Activated CD4-positive, alpha-beta memory T cell treated with anti-CD3 and anti-CD28 coated beads for 36 hours (primary cell): ENCODE measurements at regions of chr16 and their contacts with region 1.

Region 1: GRCh38 chr16:84138824-84139627 is 6.0 kb downstream of the HSDL1 start:
- DNase-seq: peak; percentile 63
- H3K4me3 Mint-ChIP-seq: peak overlapping the region; percentile 7
- H3K27ac Mint-ChIP-seq: peak overlapping the region; percentile 3
- H3K4me1 Mint-ChIP-seq: peaks cover 41% of the 10 kb centered on the region
- H3K27me3 Mint-ChIP-seq: no peaks in the 10 kb centered on the region

Region 2: DNA sequence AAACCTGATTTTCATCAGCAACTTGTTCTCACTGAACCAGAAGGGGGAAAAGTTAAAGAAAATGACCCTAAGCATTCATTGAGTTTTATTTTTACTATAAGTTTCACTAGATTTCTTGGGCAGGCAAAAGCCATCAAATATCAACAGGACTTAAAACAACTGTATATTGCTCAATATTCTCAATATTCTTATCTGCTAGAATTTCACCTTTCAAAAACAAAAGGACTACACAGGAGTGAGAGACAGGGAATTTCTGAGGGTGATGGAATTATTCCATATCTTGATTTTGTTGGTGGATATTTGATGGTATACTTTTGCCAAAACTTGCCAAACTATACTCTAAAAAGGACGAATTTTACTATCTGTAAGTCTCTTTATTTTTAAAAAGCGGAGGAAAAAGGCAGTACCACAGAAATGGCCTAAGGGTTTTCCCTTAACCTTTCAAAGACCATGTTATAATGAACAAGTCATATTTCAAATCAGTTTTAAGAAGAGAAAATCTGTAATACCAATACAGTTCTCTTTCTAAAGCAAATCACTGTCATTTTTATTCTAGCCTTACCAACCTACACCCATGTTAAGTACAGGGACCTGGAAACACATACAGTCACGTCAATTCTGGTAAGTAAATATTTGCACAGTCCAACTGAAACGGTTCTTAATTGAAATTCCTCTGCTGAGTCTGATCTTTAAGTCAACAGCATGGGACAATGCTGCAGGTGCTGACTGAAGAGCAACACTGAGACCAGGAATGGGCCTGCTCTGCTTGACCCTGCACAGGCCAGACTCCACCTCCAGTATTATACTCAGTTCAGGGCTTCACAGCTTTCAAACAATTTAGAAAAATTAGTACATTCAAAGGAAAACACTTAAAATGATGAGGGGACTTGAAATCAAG is 42.7 kb before region 1 on chr16:
- CTCF ChIA-PET with region 1: no interaction called
- POLR2A ChIA-PET with region 1: no interaction called
- intact Hi-C with region 1: loop called (anchors 5 kb)
- DNase-seq: no peak
- H3K4me3 Mint-ChIP-seq: no peak overlapping the region
- H3K27ac Mint-ChIP-seq: no peak overlapping the region
- H3K4me1 Mint-ChIP-seq: peaks cover 10% of the 10 kb centered on the region
- H3K27me3 Mint-ChIP-seq: no peaks in the 10 kb centered on the region

Region 3: DNA sequence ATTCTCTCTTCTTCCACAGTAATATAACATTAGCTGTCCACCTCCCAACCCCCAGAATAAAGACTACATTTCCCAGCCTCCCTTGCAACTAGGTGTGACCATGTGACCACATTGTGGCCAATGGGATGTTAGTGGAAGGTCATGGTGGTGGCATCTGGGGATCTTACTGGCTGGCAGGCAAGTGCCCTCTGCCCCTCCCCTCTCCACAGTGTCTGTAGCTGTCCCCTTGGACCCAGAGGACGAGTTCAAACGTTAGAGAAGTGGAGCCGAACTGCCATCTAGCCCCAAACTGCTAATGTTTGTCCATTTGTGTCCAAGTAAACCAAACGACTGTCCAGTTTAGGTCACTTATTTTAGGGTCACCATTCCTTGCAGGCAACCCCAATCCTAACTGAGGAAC is 127.4 kb after region 1 on chr16:
- CTCF ChIA-PET with region 1: no interaction called
- POLR2A ChIA-PET with region 1: no interaction called
- intact Hi-C with region 1: no loop called
- DNase-seq: peak; percentile 53
- H3K4me3 Mint-ChIP-seq: no peak overlapping the region
- H3K27ac Mint-ChIP-seq: no peak overlapping the region
- H3K4me1 Mint-ChIP-seq: no peaks in the 10 kb centered on the region
- H3K27me3 Mint-ChIP-seq: peaks cover 7% of the 10 kb centered on the region